RWPE1 (cell line): ENCODE measurements at regions of chr3 and their contacts with region 1.

Region 1: DNA sequence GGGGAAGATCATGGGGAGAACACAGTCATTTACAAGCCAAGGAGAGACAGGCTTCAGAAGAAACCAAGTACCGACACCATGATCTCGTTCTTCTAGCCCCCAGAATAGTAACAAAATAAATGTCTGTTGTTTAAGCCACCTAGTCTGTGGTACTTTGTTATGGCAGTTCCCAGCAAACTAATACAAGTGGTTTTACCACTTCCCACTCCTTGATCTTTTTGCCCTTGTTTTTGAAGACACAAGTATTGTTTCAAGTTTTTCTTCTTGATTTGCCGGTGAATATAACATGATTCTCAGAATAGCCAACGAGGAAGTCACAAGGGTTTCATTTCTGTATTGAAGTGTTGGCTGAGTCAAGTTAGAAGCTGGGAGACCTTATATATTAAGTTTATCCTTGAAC is 220.3 kb downstream of the SOX2 start:
- DNase-seq: no peak
- H3K27ac ChIP-seq: no peak overlapping the region
- CTCF ChIP-seq: no peak

Region 2: DNA sequence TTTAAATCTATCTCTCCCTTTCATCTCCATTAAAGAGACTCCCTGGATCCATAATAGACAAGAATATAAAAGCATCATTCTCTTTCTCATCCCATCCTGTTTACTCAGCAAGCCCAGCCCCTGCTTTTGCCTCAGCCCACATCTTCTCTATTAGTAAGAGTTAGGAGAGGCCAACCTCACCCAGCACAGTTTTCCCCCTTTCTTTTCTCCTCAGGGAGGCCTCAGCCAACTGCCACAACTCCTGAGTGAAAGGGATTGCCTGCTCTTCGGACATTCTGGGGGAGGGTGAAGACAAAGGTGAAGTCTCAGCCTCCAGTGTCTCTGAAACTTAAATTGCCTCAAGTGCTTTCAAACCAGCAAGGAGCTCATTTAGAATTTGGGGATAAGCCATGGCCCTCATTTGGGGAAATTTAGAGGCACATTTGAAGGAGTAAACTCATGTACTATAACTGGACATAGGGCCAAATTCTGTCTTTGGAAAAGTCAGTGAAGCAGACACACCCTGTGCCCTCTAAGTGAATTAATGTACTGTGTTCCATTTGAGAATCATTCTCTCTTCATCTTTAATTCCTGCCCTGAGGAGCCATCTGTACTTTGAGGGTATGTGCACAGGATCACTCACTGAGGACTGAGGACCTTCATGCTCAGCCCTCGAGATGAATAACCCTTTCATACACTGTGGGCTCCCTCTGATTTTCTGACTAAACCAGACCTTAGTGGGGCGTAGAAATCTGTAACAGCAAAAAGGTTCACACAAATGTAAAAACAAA is 137.8 kb before region 1 on chr3:
- CTCF ChIA-PET with region 1: no interaction called
- POLR2A ChIA-PET with region 1: no interaction called
- DNase-seq: no peak
- H3K27ac ChIP-seq: no peak overlapping the region
- CTCF ChIP-seq: no peak

Region 3: DNA sequence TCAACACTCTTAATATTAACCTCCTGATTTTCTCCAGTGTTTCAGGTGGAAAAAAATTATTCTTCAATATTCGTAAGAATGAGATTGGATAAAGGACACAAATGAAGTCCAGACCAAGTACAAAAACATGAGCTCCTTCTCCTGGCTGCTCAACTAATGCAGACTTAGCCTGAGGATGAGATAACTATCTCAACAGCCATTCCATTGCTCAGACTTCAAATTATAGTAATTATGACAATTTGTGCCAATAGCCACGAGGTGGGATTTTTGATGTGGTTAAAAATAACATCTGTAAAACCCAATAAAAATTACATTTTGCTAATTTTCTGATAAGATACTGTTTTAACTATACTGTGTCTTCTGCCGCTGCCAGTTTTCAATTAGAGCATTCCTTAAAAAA is 103.3 kb after region 1 on chr3:
- CTCF ChIA-PET with region 1: interaction called, 10 read pairs
- POLR2A ChIA-PET with region 1: no interaction called
- DNase-seq: no peak
- H3K27ac ChIP-seq: no peak overlapping the region
- CTCF ChIP-seq: no peak